ENCODE measurements at regions of chr3 and their contacts with region 1.

Region 1: GRCh38 chr3:42118762-42119361 is 27.7 kb downstream of the TRAK1 start:
- DNase-seq: peak; percentile 42 to 67 (median 54)
- ATAC-seq: peak; percentile 90
- H3K4me3 ChIP-seq: no peak overlapping the region
- H3K27ac ChIP-seq: no peak overlapping the region
- H3K4me1 ChIP-seq: peaks cover 5 to 6% of the 10 kb centered on the region in 2 experiments; a peak in 4 of 5 replicates
- H3K27me3 ChIP-seq: no peaks in the 10 kb centered on the region
- CTCF ChIP-seq: peak; percentile 61 to 69 (median 69)
- EP300 ChIP-seq: no peak
- POLR2A ChIP-seq: no peak
- RAD21 ChIP-seq: peak in 1 of 2 experiments; percentile 77; a peak in 2 of 4 replicates

Region 2: DNA sequence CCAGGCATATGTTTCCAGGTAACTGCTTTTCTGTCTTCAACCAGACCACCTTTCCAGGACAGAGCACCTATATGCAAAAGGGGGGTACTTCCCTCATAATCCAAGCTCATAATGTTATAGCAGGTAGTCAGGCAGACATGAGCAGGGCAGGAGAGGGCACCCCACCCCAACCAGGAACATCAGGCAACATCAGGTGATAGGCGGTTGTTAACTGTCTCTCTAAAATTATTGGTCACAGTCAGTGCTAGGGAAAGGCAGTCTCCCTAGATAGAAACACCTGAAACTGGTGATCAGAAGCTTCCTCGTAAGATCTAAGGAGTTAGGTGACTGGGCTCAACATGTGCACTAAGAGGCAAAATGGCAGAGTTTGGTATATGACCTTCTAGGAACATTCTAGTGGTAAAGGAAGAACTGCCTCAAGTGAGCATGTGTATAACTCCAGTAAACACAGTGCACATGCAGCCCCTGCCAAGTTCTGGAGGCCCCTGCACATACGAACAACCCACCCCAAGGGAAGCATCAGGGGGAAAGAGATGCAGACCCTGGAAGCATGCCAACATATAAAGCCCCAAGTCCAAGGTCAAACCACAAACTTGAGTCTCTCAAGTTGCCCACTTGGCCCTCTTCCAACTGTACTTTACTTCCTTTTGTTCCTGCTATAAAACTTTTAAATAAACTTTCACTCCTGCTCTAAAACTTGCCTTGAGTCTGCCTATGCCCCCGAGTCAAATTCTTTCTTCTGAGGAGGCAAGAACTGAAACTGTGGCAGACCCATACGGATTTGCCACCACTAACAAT is 427.9 kb before region 1 on chr3:
- CTCF ChIA-PET with region 1: no interaction called
- POLR2A ChIA-PET with region 1: no interaction called
- in situ Hi-C with region 1: loop called (anchors 25 kb)
- intact Hi-C with region 1: loop called (anchors 10 kb)
- DNase-seq: no peak
- ATAC-seq: no peak
- H3K4me3 ChIP-seq: no peak overlapping the region
- H3K27ac ChIP-seq: no peak overlapping the region
- H3K4me1 ChIP-seq: no peaks in the 10 kb centered on the region
- H3K27me3 ChIP-seq: no peaks in the 10 kb centered on the region; a peak in 1 of 5 replicates
- CTCF ChIP-seq: no peak
- EP300 ChIP-seq: no peak
- POLR2A ChIP-seq: no peak
- RAD21 ChIP-seq: no peak

Region 3: GRCh38 chr3:42012935-42013690 is 105.7 kb before region 1 on chr3:
- CTCF ChIA-PET with region 1: no interaction called
- POLR2A ChIA-PET with region 1: no interaction called
- in situ Hi-C with region 1: no loop called
- intact Hi-C with region 1: no loop called
- DNase-seq: peak; percentile 87 to 96 (median 94)
- ATAC-seq: peak; percentile 90
- H3K4me3 ChIP-seq: peak overlapping the region; percentile 85
- H3K27ac ChIP-seq: peak overlapping the region; percentile 87
- H3K4me1 ChIP-seq: peaks cover 16 to 21% of the 10 kb centered on the region in 2 experiments
- H3K27me3 ChIP-seq: no peaks in the 10 kb centered on the region; a peak in 1 of 5 replicates
- CTCF ChIP-seq: peak in 2 of 3 experiments; percentile 18 to 24; a peak in 2 of 6 replicates
- EP300 ChIP-seq: peak; percentile 52; the same call in 1 of the 2 replicates
- POLR2A ChIP-seq: peak; percentile 68
- RAD21 ChIP-seq: 0 out of 4 replicates have a peak, but pooled peaks of 1 of the 2 experiments have one; percentile 6

Region 4: DNA sequence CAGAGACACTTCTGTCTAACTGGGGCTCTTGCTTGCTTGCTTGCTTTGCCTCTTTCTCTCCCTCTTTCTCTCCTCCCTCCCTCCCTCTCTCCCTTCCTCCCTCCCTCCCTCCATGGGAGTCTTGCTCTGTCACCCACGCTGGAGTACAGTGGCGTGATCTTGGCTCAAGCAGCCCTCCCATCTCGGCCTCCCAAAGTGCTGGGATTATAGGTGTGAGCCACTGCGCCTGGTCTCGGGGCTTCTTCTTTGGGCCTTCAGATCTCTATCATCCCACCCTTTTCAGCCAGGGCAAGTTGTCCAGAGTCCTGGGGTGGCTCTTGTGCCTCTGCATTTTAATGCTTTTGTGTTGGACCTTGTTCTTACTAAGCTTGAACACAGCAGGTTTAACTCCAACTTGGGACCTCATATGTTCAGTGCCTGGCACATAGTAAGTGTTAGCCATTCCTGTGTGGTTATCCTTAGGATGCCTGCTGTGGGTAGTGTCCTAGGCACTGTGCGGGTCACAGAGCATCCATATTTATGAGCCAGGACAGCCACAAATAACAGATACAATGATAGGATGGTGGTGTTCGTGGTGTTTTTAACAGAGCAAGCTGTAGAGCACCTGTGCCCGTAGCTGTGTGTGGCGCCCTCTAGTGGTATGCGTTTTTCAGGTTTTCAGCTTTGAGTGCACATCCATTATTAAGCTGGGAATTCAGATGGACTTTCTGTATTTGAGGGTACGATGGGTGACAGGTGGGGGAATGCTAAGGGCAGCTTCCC is 72.0 kb after region 1 on chr3:
- CTCF ChIA-PET with region 1: interaction called, 8 read pairs
- POLR2A ChIA-PET with region 1: interaction called, 3 read pairs
- in situ Hi-C with region 1: no loop called
- intact Hi-C with region 1: loop called (anchors 1 kb)
- DNase-seq: peak; percentile 69 to 84 (median 71)
- ATAC-seq: peak; percentile 96
- H3K4me3 ChIP-seq: no peak overlapping the region
- H3K27ac ChIP-seq: no peak overlapping the region
- H3K4me1 ChIP-seq: no peaks in the 10 kb centered on the region
- H3K27me3 ChIP-seq: no peaks in the 10 kb centered on the region
- CTCF ChIP-seq: peak; percentile 82 to 93 (median 93)
- EP300 ChIP-seq: no peak
- POLR2A ChIP-seq: no peak
- RAD21 ChIP-seq: peak; percentile 61 to 83

Region 5: DNA sequence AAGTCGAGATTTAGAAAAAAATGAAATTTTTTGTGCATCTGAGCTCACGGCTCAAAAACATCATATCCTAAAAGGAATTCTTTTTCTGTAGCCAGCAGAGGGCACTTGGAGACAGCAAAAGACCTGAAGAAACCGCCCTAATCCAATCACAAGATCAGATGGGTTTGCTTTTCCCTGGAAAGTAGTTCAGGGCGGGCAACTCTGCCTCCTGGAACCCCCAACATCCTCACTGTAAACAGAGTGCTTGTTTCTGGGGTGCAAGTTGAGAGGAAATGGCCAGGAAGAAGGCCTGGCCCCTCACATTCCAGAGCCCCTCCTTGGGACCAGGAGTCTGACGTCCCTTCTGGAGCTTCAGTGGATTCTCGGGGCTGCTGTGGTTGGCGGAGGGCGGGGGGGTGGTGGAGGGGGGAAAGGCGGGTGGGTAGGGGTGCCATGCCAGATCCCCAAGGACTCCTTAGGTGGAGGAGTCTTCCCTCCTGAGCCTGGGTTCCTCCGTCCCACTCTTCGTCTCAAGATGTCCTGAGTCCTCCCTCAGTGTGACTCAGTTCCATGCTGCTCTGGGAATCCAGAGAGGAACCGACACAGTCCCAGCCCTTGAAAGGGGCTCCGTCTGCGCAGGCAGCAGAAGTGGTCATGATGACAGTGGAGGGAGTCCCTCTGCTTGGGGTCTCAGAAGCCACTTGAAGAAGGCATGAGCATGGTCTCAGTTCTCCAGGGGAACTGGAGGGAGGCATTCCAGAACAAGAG is 111.3 kb after region 1 on chr3:
- CTCF ChIA-PET with region 1: no interaction called
- POLR2A ChIA-PET with region 1: no interaction called
- in situ Hi-C with region 1: no loop called
- intact Hi-C with region 1: loop called (anchors 1 kb)
- DNase-seq: peak; percentile 41 to 59 (median 52)
- ATAC-seq: peak; percentile 66
- H3K4me3 ChIP-seq: no peak overlapping the region
- H3K27ac ChIP-seq: no peak overlapping the region
- H3K4me1 ChIP-seq: peaks cover 0 to 4% of the 10 kb centered on the region in 2 experiments; a peak in 2 of 5 replicates
- H3K27me3 ChIP-seq: peaks cover 7 to 28% of the 10 kb centered on the region in 2 experiments; a peak in 4 of 5 replicates
- CTCF ChIP-seq: peak; percentile 60 to 80 (median 68)
- EP300 ChIP-seq: no peak
- POLR2A ChIP-seq: no peak
- RAD21 ChIP-seq: peak; percentile 80 to 89

Measured in K562 (cell line).